Caco-2 (cell line): ENCODE measurements at regions of chr5 and their contacts with region 1.

Region 1: DNA sequence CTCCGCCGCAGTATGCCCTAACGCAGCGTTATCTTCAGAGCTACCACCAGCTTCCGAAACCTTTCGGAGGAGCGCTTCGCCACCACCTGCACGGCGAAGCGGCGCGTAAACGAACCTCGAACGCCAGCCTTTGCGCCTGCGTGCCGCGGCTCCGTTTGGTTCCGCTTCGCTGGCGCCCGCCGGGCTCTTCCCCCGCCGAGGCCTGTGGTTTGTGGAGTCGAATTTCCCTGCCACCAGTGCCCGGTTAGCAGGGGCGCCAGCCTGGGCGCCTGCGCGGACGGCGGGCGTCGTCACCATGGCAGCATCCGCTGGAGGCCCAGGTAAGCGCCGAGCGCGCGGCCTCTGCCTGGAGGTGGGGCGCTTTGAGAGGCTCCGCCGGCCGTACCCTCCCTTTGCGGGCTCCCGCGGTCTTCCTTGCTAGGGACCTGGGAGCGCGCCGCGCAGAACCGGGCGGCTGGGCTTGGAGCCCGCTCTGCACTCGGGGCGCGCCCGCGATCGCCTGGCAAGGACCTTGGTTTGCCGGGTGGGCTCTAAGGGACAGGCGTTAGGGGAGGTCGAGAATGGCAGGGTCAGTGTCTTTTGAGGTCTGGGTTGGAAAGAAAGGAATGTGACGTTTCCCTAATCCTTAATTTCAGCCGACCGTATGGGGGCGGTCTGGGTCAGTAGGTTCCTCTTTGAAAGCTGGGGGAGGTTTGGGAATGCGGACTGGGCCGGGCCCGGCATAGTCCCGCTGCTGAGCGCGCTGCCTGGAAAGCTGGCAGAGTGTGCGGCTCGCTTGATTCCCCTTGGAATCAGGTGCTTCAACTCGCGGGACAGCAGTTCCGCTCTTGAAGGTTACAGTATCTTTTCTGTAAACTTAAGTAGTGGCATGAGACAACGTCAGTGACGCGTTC is at the start of gene FAM151B:
- DNase-seq: peak; percentile 93 to 95
- H3K4me3 ChIP-seq: peak within 1 kb of the TSS; percentile 76
- H3K4me3 Mint-ChIP-seq: peak within 1 kb of the TSS; percentile 92
- H3K27ac Mint-ChIP-seq: peak within 1 kb of the TSS; percentile 84
- H3K4me1 ChIP-seq: 0 out of 2 replicates have a peak, but pooled peaks cover 3% of the 10 kb centered on the region
- H3K4me1 Mint-ChIP-seq: peaks cover 32% of the 10 kb centered on the region
- H3K27me3 ChIP-seq: no peaks in the 10 kb centered on the region
- H3K27me3 Mint-ChIP-seq: no peaks in the 10 kb centered on the region
- CTCF ChIP-seq: peak in 1 of 2 experiments; percentile 21
- total RNA-seq, gene FAM151B: 2.4 TPM in 2 replicates

Region 2: DNA sequence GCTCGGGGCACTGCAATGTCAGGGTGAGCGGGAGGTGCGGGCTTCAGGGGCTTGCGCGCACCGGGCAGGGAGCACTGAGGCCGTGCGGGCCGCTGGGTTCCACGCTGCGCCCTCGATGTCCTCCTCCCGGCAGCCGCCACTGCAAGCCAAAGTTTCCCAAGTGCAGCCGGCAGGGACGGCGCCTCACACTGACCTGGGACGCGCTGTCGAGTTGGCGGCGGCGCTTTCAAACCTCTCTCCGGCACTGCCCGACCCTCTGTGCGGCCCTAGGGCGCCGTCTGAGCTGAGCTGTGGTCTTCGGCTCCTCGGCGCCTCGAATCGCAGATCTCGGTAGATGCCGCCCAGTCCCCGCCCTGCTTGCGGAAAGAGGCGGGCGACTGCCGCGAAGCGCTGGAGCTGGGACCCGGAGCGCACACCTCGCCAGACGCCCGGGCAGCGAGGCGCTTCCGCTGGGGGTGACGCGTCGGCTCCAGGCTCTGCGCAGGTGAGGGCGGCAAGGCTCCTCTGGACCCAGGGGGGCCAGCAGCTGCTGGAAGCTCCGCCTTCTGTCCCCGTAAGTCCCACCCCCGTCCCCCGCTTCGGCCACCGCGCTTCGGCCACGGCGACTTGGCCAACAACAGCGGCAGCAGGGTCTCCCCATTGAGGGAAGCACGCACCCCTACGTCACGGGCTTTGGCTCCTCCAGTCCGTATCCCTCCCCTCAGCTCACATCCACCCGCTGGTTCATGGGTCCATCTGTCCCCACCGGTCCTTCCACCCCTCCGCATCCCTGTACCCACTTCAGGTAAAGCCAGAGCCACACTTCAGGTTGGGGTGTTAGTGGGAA is 82.1 kb after region 1 on chr5 and contains the start of gene ANKRD34B:
- CTCF ChIA-PET with region 1: no interaction called
- POLR2A ChIA-PET with region 1: no interaction called
- intact Hi-C with region 1: loop called (anchors 10 kb)
- DNase-seq: peak; percentile 42 to 45
- H3K4me3 ChIP-seq: peak within 1 kb of the TSS; percentile 39
- H3K4me3 Mint-ChIP-seq: peak within 1 kb of the TSS; percentile 70
- H3K27ac Mint-ChIP-seq: no peak within 1 kb of the TSS
- H3K4me1 ChIP-seq: 0 out of 2 replicates have a peak, but pooled peaks cover 6% of the 10 kb centered on the region
- H3K4me1 Mint-ChIP-seq: no peaks in the 10 kb centered on the region
- H3K27me3 ChIP-seq: peaks cover 2% of the 10 kb centered on the region
- H3K27me3 Mint-ChIP-seq: peaks cover 29% of the 10 kb centered on the region
- CTCF ChIP-seq: no peak
- total RNA-seq, gene ANKRD34B: 0.07 TPM in 1 of 2 replicates, not detected in the other

Region 3: DNA sequence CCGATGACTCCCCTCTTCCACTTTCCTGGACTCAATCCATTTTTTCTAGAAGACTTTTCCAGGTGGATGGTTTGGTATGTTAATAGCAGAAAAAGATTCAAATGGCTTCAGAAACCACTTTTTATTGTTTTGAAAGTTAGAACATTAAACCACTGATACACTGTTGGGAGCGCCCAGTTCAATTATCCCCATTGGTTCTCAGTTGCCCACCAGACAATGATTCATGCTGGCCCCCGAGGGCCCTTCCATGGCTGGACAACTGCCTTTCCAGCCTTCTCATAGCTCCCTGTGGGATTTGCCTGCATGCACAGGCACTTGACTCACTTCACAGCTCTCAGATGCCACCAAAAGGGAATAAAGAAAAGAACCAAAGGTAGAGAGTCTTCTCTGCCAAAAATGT is 103.3 kb after region 1 on chr5:
- CTCF ChIA-PET with region 1: no interaction called
- POLR2A ChIA-PET with region 1: no interaction called
- intact Hi-C with region 1: loop called (anchors 10 kb)
- DNase-seq: no peak
- H3K4me3 ChIP-seq: no peak overlapping the region
- H3K4me3 Mint-ChIP-seq: no peak overlapping the region
- H3K27ac Mint-ChIP-seq: no peak overlapping the region
- H3K4me1 ChIP-seq: no peaks in the 10 kb centered on the region
- H3K4me1 Mint-ChIP-seq: peaks cover 11% of the 10 kb centered on the region
- H3K27me3 ChIP-seq: no peaks in the 10 kb centered on the region
- H3K27me3 Mint-ChIP-seq: no peaks in the 10 kb centered on the region
- CTCF ChIP-seq: no peak

Region 4: DNA sequence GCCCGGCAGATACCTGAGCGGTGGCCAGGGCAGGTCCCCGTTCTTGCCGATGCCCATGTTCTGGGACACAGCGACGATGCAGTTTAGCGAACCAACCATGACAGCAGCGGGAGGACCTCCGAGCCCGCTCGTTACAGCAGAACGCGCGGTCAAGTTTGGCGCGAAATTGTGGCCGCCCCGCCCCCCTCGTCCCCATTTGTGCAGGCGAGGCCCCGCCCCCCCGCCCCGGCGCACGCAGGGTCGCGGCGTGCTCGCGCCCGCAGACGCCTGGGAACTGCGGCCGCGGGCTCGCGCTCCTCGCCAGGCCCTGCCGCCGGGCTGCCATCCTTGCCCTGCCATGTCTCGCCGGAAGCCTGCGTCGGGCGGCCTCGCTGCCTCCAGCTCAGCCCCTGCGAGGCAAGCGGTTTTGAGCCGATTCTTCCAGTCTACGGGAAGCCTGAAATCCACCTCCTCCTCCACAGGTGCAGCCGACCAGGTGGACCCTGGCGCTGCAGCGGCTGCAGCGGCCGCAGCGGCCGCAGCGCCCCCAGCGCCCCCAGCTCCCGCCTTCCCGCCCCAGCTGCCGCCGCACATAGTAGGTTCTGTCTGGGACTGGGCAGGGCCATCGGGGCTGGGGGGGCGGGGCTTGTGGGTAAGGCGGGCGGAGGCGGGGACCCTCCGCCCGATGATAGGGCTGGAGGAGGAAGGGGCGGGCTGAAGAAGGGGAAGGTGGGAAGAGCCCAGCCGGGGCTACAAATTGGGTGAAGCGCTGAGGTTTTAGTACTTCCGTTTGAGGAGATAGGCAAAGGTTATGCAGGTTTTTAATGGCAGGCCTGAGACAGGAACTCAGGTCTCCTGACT is 166.5 kb after region 1 on chr5 and contains the starts of genes DHFR and MSH3:
- CTCF ChIA-PET with region 1: interaction called, 4 read pairs
- POLR2A ChIA-PET with region 1: interaction called, 8 read pairs
- intact Hi-C with region 1: loop called (anchors 1 kb)
- DNase-seq: peak; percentile 89 to 93
- H3K4me3 ChIP-seq: peak within 1 kb of the TSS; percentile 98
- H3K4me3 Mint-ChIP-seq: peak within 1 kb of the TSS; percentile 81
- H3K27ac Mint-ChIP-seq: peak within 1 kb of the TSS; percentile 82
- H3K4me1 ChIP-seq: peaks cover 14% of the 10 kb centered on the region
- H3K4me1 Mint-ChIP-seq: peaks cover 11% of the 10 kb centered on the region
- H3K27me3 ChIP-seq: no peaks in the 10 kb centered on the region
- H3K27me3 Mint-ChIP-seq: no peaks in the 10 kb centered on the region
- CTCF ChIP-seq: peak; percentile 19 to 54
- total RNA-seq, gene DHFR: 57.2 and 59.2 TPM in 2 replicates
- total RNA-seq, gene MSH3: 15.9 and 17.1 TPM in 2 replicates

Region 5: GRCh38 chr5:80672140-80672736 is 184.2 kb after region 1 on chr5:
- CTCF ChIA-PET with region 1: interaction called, 5 read pairs
- POLR2A ChIA-PET with region 1: interaction called, 3 read pairs
- intact Hi-C with region 1: loop called (anchors 1 kb)
- DNase-seq: peak; percentile 76 to 77
- H3K4me3 ChIP-seq: no peak overlapping the region
- H3K4me3 Mint-ChIP-seq: no peak overlapping the region
- H3K27ac Mint-ChIP-seq: no peak overlapping the region
- H3K4me1 ChIP-seq: no peaks in the 10 kb centered on the region
- H3K4me1 Mint-ChIP-seq: no peaks in the 10 kb centered on the region
- H3K27me3 ChIP-seq: no peaks in the 10 kb centered on the region
- H3K27me3 Mint-ChIP-seq: no peaks in the 10 kb centered on the region
- CTCF ChIP-seq: peak; percentile 77 to 87

Region 6: GRCh38 chr5:80895523-80895922 is 407.4 kb after region 1 on chr5:
- CTCF ChIA-PET with region 1: no interaction called
- POLR2A ChIA-PET with region 1: no interaction called
- intact Hi-C with region 1: no loop called
- DNase-seq: no peak
- H3K4me3 ChIP-seq: no peak overlapping the region
- H3K4me3 Mint-ChIP-seq: no peak overlapping the region
- H3K27ac Mint-ChIP-seq: no peak overlapping the region
- H3K4me1 ChIP-seq: no peaks in the 10 kb centered on the region
- H3K4me1 Mint-ChIP-seq: no peaks in the 10 kb centered on the region
- H3K27me3 ChIP-seq: no peaks in the 10 kb centered on the region
- H3K27me3 Mint-ChIP-seq: no peaks in the 10 kb centered on the region
- CTCF ChIP-seq: no peak